AG04449 (cell line): ENCODE measurements at regions of chr2 and their contacts with region 1.

Region 1: GRCh38 chr2:67465623-67466022 is 68.5 kb downstream of the ETAA1 start:
- DNase-seq: no peak
- H3K4me3 ChIP-seq: no peak overlapping the region
- CTCF ChIP-seq: no peak

Region 2: GRCh38 chr2:67476809-67477790 is 11.5 kb after region 1 on chr2:
- CTCF ChIA-PET with region 1: interaction called, 12 read pairs
- POLR2A ChIA-PET with region 1: no interaction called
- DNase-seq: no peak
- H3K4me3 ChIP-seq: no peak overlapping the region
- CTCF ChIP-seq: peak; percentile 39